ENCODE measurements at regions of chrX and their contacts with region 1.

Region 1: GRCh38 chrX:154478728-154479622 is at the start of gene LAGE3:
- DNase-seq: peak; percentile 97
- ATAC-seq: peak; percentile 96
- H3K4me3 Mint-ChIP-seq: peak within 1 kb of the TSS; percentile 80
- H3K27ac Mint-ChIP-seq: peak within 1 kb of the TSS; percentile 90
- H3K4me1 Mint-ChIP-seq: peaks cover 24% of the 10 kb centered on the region
- H3K27me3 Mint-ChIP-seq: no peaks in the 10 kb centered on the region
- total RNA-seq, gene LAGE3: 34.7 to 43.0 TPM

Region 2: GRCh38 chrX:154294791-154295574 is 184.0 kb before region 1 on chrX and contains the start of gene TEX28:
- CTCF ChIA-PET with region 1: no interaction called
- POLR2A ChIA-PET with region 1: no interaction called
- intact Hi-C with region 1: no loop called
- DNase-seq: no peak
- ATAC-seq: no peak
- H3K4me3 Mint-ChIP-seq: no peak within 1 kb of the TSS
- H3K27ac Mint-ChIP-seq: no peak within 1 kb of the TSS
- H3K4me1 Mint-ChIP-seq: no peaks in the 10 kb centered on the region
- H3K27me3 Mint-ChIP-seq: no peaks in the 10 kb centered on the region
- total RNA-seq, gene TEX28: not detected

Region 3: DNA sequence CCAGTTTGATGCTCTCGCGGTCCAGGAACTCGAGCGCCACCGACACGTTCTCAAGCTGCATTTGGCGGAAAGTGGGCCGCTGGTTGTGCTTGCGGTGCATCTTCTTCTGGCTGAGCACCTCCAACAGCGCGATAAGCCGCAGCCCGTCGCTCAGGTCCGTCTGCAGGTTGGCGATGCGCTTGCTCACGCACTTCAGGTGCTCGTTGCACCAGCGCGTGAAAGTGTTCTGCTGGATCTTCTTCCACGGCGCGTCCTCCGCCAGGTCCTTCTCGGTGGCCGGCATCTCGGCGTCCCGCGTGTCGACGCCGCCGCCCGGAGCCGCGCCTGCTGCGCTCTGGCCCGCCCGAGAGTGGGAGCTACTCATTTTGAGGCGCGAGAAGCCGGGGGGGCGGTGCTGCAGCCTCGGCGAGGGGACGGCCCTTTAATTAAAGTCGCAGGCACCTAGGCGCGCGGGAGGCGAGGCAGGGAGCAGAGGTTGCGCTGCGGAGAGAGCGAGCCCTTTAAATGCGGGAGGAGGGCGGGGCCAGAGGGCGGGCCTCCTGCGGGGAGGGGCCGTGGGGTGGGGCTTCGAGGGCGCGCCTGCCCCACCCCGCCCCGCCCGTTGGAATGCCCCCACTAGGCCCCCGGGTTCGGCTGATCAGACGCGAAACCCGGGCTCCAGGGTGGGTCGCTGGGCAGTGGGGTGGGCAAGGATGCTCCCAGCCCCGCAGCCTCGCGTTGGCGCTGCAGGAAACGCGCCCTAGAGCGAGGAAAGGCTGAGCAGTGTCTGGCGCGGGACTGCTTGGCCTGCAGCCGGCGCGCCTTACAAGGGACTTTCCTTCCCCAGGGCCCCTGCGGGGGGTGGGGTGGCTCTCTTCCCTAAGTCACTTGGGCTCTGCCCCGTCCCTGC is 107.8 kb before region 1 on chrX:
- CTCF ChIA-PET with region 1: no interaction called
- POLR2A ChIA-PET with region 1: no interaction called
- intact Hi-C with region 1: loop called in 1 of 2 experiments (anchors 1 kb)
- DNase-seq: peak; percentile 96
- ATAC-seq: peak; percentile 55
- H3K4me3 Mint-ChIP-seq: peak overlapping the region; percentile 86
- H3K27ac Mint-ChIP-seq: peak overlapping the region; percentile 55
- H3K4me1 Mint-ChIP-seq: peaks cover 22% of the 10 kb centered on the region
- H3K27me3 Mint-ChIP-seq: no peaks in the 10 kb centered on the region

Region 4: DNA sequence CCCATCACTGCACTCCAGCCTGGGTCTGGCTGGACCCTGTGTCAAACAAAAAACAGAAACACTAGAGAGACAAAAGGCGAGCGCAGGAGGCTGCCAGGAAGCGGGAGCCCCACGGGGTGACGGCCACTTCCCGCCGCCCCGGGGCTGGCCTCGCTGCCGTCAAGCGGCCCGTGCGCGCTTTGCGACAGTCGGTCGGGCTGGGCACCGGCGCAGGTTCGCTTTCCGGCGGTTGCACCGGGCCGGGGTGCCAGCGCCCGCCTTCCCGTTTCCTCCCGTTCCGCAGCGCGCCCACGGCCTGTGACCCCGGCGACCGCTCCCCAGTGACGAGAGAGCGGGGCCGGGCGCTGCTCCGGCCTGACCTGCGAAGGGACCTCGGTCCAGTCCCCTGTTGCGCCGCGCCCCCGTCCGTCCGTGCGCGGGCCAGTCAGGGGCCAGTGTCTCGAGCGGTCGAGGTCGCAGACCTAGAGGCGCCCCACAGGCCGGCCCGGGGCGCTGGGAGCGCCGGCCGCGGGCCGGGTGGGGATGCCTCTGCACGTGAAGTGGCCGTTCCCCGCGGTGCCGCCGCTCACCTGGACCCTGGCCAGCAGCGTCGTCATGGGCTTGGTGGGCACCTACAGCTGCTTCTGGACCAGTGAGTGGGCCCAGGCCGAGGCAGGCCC is 67.5 kb before region 1 on chrX and contains the start of gene TAFAZZIN:
- CTCF ChIA-PET with region 1: no interaction called
- POLR2A ChIA-PET with region 1: no interaction called
- intact Hi-C with region 1: loop called in 1 of 2 experiments (anchors 1 kb)
- DNase-seq: peak; percentile 87
- ATAC-seq: peak; percentile 73
- H3K4me3 Mint-ChIP-seq: peak within 1 kb of the TSS; percentile 86
- H3K27ac Mint-ChIP-seq: peak within 1 kb of the TSS; percentile 94
- H3K4me1 Mint-ChIP-seq: peaks cover 13% of the 10 kb centered on the region
- H3K27me3 Mint-ChIP-seq: no peaks in the 10 kb centered on the region
- total RNA-seq, gene TAFAZZIN: 43.8 to 49.0 TPM

Region 5: GRCh38 chrX:154436983-154437719 is 41.8 kb before region 1 on chrX and contains the start of gene GDI1:
- CTCF ChIA-PET with region 1: no interaction called
- POLR2A ChIA-PET with region 1: no interaction called
- intact Hi-C with region 1: loop called (anchors 1 to 5 kb)
- DNase-seq: peak; percentile 69
- ATAC-seq: peak; percentile 40
- H3K4me3 Mint-ChIP-seq: peak within 1 kb of the TSS; percentile 83
- H3K27ac Mint-ChIP-seq: peak within 1 kb of the TSS; percentile 87
- H3K4me1 Mint-ChIP-seq: peaks cover 22% of the 10 kb centered on the region
- H3K27me3 Mint-ChIP-seq: no peaks in the 10 kb centered on the region
- total RNA-seq, gene GDI1: 100 to 117 TPM

Region 6: DNA sequence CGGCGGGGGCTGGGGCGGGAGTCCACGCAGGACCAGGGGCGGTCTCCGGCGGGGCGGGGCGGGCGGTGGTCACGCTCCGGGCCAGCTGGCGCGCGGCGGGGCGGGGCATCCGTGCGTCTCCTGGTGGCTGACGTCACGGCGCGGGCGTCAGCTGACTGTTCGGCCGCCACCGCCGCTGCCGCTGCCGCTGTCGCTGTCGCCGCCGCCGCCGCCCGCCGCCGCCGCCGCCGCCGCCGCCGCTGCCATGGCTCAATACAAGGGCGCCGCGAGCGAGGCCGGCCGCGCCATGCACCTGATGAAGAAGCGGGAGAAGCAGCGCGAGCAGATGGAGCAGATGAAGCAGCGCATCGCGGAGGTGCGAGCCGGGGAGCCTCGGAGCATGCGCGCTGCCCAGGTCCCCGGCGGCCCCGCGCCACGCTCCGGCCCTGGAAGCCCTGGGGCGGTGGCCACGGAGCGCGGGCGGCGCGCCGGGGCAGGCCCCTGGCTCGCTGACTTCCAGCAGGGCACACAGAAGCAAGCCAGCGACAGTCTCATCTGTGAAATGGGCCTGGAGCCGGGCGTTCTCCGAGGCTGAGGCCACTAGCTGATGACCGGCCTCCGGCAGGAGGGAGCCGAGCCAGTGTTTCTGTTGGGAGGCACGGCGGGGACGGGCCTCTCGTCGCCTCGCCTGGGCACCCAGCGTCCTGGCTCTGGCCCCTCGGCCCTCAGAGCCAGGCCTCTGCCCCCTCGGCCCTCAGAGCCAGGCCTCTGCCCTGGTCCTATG is 34.8 kb before region 1 on chrX and contains the start of gene FAM50A:
- CTCF ChIA-PET with region 1: no interaction called
- POLR2A ChIA-PET with region 1: no interaction called
- intact Hi-C with region 1: loop called in 1 of 2 experiments (anchors 5 kb)
- DNase-seq: peak; percentile 82
- ATAC-seq: peak; percentile 86
- H3K4me3 Mint-ChIP-seq: peak within 1 kb of the TSS; percentile 67
- H3K27ac Mint-ChIP-seq: peak within 1 kb of the TSS; percentile 24
- H3K4me1 Mint-ChIP-seq: peaks cover 22% of the 10 kb centered on the region
- H3K27me3 Mint-ChIP-seq: no peaks in the 10 kb centered on the region
- total RNA-seq, gene FAM50A: 40.9 to 50.0 TPM

Region 7: DNA sequence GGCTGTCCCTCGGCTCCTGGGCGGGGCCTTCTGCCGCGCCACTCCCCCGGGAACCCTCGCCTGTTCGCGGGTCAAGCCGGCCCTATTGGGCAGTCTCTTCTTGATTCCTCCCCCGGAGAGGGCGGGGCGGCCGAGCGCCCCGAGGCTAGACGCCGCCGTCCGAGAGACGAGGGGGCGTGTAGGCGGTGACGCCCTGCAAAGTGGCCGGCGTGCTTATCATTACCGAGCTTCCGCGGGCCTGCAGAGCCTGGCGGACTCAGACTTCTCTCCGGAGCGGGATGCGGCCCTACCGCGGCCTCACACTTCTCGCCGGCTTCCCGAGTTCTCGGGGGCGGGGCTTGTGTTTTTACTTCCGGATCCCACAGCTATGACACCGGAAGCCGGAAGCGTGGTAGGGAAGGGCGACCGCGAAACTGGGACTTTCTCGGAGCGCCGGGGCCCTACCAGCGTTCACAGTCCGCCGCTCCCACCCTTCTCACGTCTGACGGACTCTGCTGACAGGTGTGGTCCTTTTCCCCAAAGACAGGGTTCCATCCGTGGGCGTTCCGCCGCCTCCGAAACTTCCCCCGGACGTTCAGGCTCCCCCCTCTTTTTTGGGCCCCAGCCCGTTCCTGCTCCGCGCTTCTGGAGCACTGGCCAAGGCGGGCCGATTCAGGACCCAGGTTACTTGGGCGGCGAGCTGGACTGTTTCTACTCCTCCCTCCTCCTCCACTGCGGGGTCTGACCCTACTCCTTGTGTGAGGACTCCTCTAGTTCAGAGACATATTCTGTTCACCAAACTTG is 68.5 kb after region 1 on chrX and contains the start of gene IKBKG:
- CTCF ChIA-PET with region 1: no interaction called
- POLR2A ChIA-PET with region 1: no interaction called
- intact Hi-C with region 1: loop called in 1 of 2 experiments (anchors 1 kb)
- DNase-seq: peak; percentile 92
- ATAC-seq: peak; percentile 81
- H3K4me3 Mint-ChIP-seq: peak within 1 kb of the TSS; percentile 99
- H3K27ac Mint-ChIP-seq: peak within 1 kb of the TSS; percentile 97
- H3K4me1 Mint-ChIP-seq: peaks cover 39% of the 10 kb centered on the region
- H3K27me3 Mint-ChIP-seq: no peaks in the 10 kb centered on the region
- total RNA-seq, gene IKBKG: 32.7 to 33.0 TPM

Measured in activated CD4-positive, alpha-beta T cell treated with anti-CD3 and anti-CD28 coated beads for 36 hours (primary cell).